ENCODE measurements at regions of chr2 and their contacts with region 1.

Region 1: DNA sequence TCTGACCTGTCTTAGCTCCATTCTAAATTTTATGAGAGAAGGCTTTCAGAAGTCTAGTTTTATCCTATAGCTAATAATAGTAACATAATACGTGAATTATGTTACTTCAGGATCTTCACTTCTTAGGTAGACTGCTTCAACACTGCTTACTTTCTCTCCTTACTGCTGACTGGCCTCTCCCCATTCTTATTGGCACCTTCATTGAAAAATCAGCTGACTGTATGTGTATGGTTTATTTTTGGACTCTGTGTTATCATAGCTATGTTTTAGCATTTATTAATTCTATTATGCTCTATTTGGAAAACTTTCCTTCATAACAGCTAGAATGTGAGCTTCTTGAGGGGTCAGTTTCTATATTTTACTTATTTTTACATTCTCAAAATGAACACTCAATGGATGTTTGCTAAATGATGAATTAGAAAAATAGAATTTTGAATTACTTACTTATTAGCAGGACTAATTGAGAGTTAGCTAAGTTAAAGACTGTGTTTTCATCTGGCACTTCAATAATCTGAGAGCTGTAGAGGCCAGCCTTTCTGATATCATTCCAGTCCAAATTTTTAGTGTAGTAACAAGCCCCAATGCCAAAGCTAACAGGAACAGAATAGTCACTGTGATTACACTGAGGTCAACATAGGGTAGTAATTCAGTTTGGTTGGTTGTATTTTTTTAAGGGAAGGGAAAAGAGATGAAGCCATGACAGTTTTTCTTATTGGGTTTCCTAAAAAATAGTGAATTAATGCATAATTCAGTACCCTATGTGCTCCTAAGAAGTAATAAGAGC is 92.3 kb downstream of the TTC27 start:
- DNase-seq: no peak
- H3K4me3 ChIP-seq: no peak overlapping the region
- H3K27ac ChIP-seq: no peak overlapping the region
- H3K4me1 ChIP-seq: peaks cover 10% of the 10 kb centered on the region
- H3K27me3 ChIP-seq: no peaks in the 10 kb centered on the region
- CTCF ChIP-seq: no peak

Region 2: GRCh38 chr2:32377928-32378327 is 342.2 kb before region 1 on chr2:
- CTCF ChIA-PET with region 1: no interaction called
- POLR2A ChIA-PET with region 1: no interaction called
- intact Hi-C with region 1: no loop called
- DNase-seq: no peak
- H3K4me3 ChIP-seq: no peak overlapping the region
- H3K27ac ChIP-seq: no peak overlapping the region
- H3K4me1 ChIP-seq: no peaks in the 10 kb centered on the region
- H3K27me3 ChIP-seq: no peaks in the 10 kb centered on the region
- CTCF ChIP-seq: no peak

Region 3: DNA sequence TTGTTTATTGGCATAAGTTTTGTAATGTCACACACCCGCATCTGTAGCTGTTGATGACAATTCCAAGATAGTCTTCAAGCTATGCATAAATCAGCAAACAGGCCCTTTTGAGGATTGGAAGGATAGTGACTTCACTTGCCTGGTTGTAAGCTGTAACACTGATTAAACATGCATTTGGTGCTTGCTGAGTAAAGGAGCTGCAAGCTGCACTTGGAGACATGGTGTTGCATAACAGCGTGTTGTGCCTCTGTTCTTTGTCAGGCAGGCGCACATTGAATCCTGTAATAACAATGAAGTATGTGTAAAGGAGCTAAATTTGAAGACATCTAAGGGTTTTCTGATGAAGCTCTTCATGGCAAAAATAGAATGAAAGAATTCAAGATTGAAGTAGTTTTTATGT is 161.0 kb before region 1 on chr2:
- CTCF ChIA-PET with region 1: no interaction called
- POLR2A ChIA-PET with region 1: no interaction called
- intact Hi-C with region 1: loop called (anchors 5 kb)
- DNase-seq: peak; percentile 29
- H3K4me3 ChIP-seq: no peak overlapping the region
- H3K27ac ChIP-seq: no peak overlapping the region
- H3K4me1 ChIP-seq: no peaks in the 10 kb centered on the region
- H3K27me3 ChIP-seq: no peaks in the 10 kb centered on the region
- CTCF ChIP-seq: no peak

Region 4: GRCh38 chr2:32882816-32883810 is 163.0 kb after region 1 on chr2:
- CTCF ChIA-PET with region 1: no interaction called
- POLR2A ChIA-PET with region 1: no interaction called
- intact Hi-C with region 1: no loop called
- DNase-seq: no peak
- H3K4me3 ChIP-seq: no peak overlapping the region
- H3K27ac ChIP-seq: no peak overlapping the region
- H3K4me1 ChIP-seq: no peaks in the 10 kb centered on the region
- H3K27me3 ChIP-seq: no peaks in the 10 kb centered on the region
- CTCF ChIP-seq: no peak

Region 5: DNA sequence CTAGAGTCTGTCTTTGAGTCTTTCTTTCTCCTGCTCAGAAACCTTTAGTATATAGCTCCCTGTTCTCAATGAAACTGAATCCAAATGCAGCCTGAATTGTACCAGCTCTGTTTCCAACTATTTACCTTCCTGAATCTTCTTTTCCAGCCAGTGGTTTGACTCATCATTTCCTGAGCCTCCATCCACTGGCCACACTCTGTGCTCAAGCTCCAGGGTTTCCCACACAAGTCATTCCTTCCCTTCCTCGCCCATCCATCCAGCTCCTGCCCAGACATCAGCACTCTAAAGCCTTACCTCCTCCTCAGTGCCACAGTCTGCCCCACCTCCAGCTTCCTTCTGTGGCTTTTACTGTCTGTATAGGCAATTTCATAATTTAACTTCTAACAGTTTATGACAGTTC is 522.7 kb after region 1 on chr2:
- CTCF ChIA-PET with region 1: interaction called, 10 read pairs
- POLR2A ChIA-PET with region 1: no interaction called
- intact Hi-C with region 1: no loop called
- DNase-seq: no peak
- H3K4me3 ChIP-seq: no peak overlapping the region
- H3K27ac ChIP-seq: no peak overlapping the region
- H3K4me1 ChIP-seq: peaks cover 5% of the 10 kb centered on the region
- H3K27me3 ChIP-seq: no peaks in the 10 kb centered on the region
- CTCF ChIP-seq: no peak